Activated T-helper 2 cell treated with anti-CD3 and anti-CD28 coated beads, Interferon-gamma antibody, Interleukin-2, Interleukin-4, amounts not matched to agents 10 μg/mL and 5 μg/mL and 100 μg/mL, durations not matched to agents 14 hours and 24 hours and 36 hours (primary cell): ENCODE measurements at regions of chr2 and their contacts with region 1.

Region 1: GRCh38 chr2:206512999-206513398 is 69.7 kb downstream of the ADAM23 start:
- DNase-seq: no peak
- H3K4me3 Mint-ChIP-seq: no peak overlapping the region
- H3K27ac Mint-ChIP-seq: no peak overlapping the region
- H3K4me1 Mint-ChIP-seq: peaks cover 9% of the 10 kb centered on the region
- H3K27me3 Mint-ChIP-seq: peaks cover 29% of the 10 kb centered on the region

Region 2: GRCh38 chr2:206556357-206556949 is 43.5 kb after region 1 on chr2:
- intact Hi-C with region 1: loop called (anchors 5 kb)
- DNase-seq: no peak
- H3K4me3 Mint-ChIP-seq: no peak overlapping the region
- H3K27ac Mint-ChIP-seq: no peak overlapping the region
- H3K4me1 Mint-ChIP-seq: peaks cover 12% of the 10 kb centered on the region
- H3K27me3 Mint-ChIP-seq: peaks cover 27% of the 10 kb centered on the region